Activated CD4-positive, alpha-beta T cell treated with anti-CD3 and anti-CD28 coated beads, Interleukin-2, amount 10 ng/mL, durations not matched to agents 24 days and 14 days (primary cell): ENCODE measurements at regions of chr3 and their contacts with region 1.

Region 1: GRCh38 chr3:98343647-98344507 is 9.8 kb upstream of the OR5K4 start:
- DNase-seq: peak; percentile 83
- H3K4me3 Mint-ChIP-seq: no peak overlapping the region
- H3K27ac Mint-ChIP-seq: no peak overlapping the region
- H3K4me1 Mint-ChIP-seq: peaks cover 7% of the 10 kb centered on the region
- H3K27me3 Mint-ChIP-seq: peaks cover 58% of the 10 kb centered on the region

Region 2: GRCh38 chr3:98513091-98513511 is 169.2 kb after region 1 on chr3:
- intact Hi-C with region 1: loop called (anchors 10 kb)
- DNase-seq: no peak
- H3K4me3 Mint-ChIP-seq: no peak overlapping the region
- H3K27ac Mint-ChIP-seq: peak overlapping the region; percentile 7
- H3K4me1 Mint-ChIP-seq: peaks cover 47% of the 10 kb centered on the region
- H3K27me3 Mint-ChIP-seq: no peaks in the 10 kb centered on the region

Region 3: DNA sequence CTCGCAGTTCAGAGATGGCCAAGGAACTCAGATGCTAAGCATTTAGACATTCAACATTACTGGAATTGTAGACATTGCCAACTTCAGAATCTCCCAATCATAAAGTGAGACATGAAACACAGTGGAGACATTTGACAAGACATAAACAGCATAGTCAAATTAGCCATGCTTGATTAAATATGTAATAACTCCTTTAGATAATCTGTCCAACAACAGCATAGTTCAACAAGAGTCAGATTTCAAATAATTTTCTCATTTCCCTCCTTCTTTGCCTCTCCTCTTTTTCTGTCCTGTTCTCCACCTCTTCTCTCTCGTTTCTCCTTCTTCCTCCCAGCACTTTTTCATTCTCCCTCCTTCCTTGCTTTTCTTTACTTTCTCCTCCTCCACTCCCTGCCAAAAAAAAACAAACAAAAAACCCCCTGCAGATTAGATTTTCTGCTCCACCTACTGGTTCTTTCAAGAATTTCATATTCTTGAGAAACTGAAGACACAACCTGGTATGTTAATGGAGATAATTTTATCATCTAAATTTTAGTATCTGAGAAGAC is 229.4 kb after region 1 on chr3:
- intact Hi-C with region 1: loop called (anchors 2 kb)
- DNase-seq: peak; percentile 65
- H3K4me3 Mint-ChIP-seq: peak overlapping the region; percentile 59
- H3K27ac Mint-ChIP-seq: peak overlapping the region; percentile 75
- H3K4me1 Mint-ChIP-seq: peaks cover 49% of the 10 kb centered on the region
- H3K27me3 Mint-ChIP-seq: no peaks in the 10 kb centered on the region